Left lung (tissue), 14 donors: ENCODE measurements at regions of chr6 and their contacts with region 1.

Region 1: GRCh38 chr6:106097411-106098231 is 11.5 kb downstream of the PRDM1 start:
- DNase-seq: peak in 1 of 4 donors; percentile 35
- ATAC-seq: peak; percentile 63
- H3K4me3 ChIP-seq: peak overlapping the region; percentile 18 to 45
- H3K27ac ChIP-seq: peak overlapping the region; percentile 77 to 91
- H3K4me1 ChIP-seq: peaks cover 6 to 53% of the 10 kb centered on the region in 2 donors
- H3K27me3 ChIP-seq: peaks cover 24 to 75% of the 10 kb centered on the region in 2 donors
- CTCF ChIP-seq: no peak

Region 2: DNA sequence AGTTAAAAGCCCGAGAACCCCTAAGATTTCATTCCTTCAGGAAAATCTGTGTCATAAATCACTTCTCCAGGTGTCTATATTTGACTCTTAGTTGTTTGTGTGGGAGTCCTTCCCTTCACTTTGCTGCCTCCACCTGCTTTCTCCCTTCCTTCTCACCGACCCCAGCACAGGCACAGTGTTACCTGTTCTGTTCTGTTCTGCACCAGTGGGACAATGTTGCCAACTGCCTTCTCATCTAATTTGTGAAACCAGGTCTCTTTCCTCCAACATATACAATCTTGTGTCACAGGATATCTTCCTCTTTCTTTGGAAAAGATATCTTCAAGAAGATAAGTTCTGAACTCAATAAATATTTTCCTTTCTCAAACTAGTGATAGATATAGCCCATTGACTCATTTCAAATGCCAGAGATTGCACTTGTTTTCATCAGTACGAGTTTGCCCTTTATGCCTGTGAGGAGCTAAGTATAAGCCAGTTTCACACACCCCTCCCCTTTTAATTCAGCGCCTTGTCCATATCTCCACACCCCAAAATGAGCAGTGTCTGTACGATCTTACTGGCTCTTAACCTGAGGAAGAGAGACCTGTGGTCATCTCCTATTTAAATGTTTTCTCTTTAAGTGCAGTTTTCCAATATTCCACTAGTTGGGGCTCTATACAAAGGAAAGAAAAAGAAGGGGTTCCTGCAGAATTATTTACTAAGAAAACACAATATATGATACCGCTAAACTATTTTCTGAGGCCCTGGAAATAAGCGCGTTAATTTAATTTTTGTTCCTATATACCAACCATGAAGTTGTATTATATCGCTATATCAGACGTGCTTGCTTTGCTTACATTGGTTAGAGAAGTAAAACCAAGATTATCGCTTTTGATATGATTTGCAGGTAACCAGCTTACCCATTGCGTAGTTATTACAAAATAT is 613.1 kb before region 1 on chr6:
- intact Hi-C with region 1: loop called in 1 of 2 experiments (anchors 10 kb)
- DNase-seq: peak in 2 of 4 donors; percentile 31 to 36
- ATAC-seq: peak; percentile 81
- H3K4me3 ChIP-seq: no peak overlapping the region
- H3K27ac ChIP-seq: no peak overlapping the region
- H3K4me1 ChIP-seq: peaks cover 0 to 13% of the 10 kb centered on the region in 2 donors
- H3K27me3 ChIP-seq: no peaks in the 10 kb centered on the region
- CTCF ChIP-seq: peak; percentile 44 to 92

Region 3: GRCh38 chr6:106046116-106046853 is 51.3 kb before region 1 on chr6:
- intact Hi-C with region 1: no loop called
- DNase-seq: peak in 1 of 4 donors; percentile 59
- ATAC-seq: no peak
- H3K4me3 ChIP-seq: no peak overlapping the region
- H3K27ac ChIP-seq: no peak overlapping the region
- H3K4me1 ChIP-seq: no peaks in the 10 kb centered on the region
- H3K27me3 ChIP-seq: no peaks in the 10 kb centered on the region
- CTCF ChIP-seq: no peak